SK-N-SH (cell line): ENCODE measurements at regions of chr4 and their contacts with region 1.

Region 1: GRCh38 chr4:158253350-158253980 is 43.2 kb downstream of the TMEM144 start:
- DNase-seq: peak; percentile 48
- H3K4me3 ChIP-seq: no peak overlapping the region
- H3K27ac ChIP-seq: no peak overlapping the region
- H3K4me1 ChIP-seq: no peaks in the 10 kb centered on the region; a peak in 1 of 4 replicates
- H3K27me3 ChIP-seq: no peaks in the 10 kb centered on the region
- CTCF ChIP-seq: peak; percentile 79
- EP300 ChIP-seq: no peak
- RAD21 ChIP-seq: peak; percentile 87

Region 2: GRCh38 chr4:158193171-158193749 is 60.2 kb before region 1 on chr4:
- CTCF ChIA-PET with region 1: interaction called, 11 read pairs
- POLR2A ChIA-PET with region 1: no interaction called
- DNase-seq: peak; percentile 30
- H3K4me3 ChIP-seq: no peak overlapping the region
- H3K27ac ChIP-seq: no peak overlapping the region
- H3K4me1 ChIP-seq: no peaks in the 10 kb centered on the region
- H3K27me3 ChIP-seq: no peaks in the 10 kb centered on the region
- CTCF ChIP-seq: peak; percentile 59
- EP300 ChIP-seq: no peak
- RAD21 ChIP-seq: peak; percentile 49

Region 3: GRCh38 chr4:158234671-158235070 is 18.8 kb before region 1 on chr4:
- CTCF ChIA-PET with region 1: interaction called, 11 read pairs
- POLR2A ChIA-PET with region 1: no interaction called
- DNase-seq: no peak
- H3K4me3 ChIP-seq: no peak overlapping the region
- H3K27ac ChIP-seq: no peak overlapping the region
- H3K4me1 ChIP-seq: peaks cover 0 to 2% of the 10 kb centered on the region in 2 experiments; a peak in 1 of 4 replicates
- H3K27me3 ChIP-seq: no peaks in the 10 kb centered on the region
- CTCF ChIP-seq: no peak
- EP300 ChIP-seq: no peak
- RAD21 ChIP-seq: no peak

Region 4: DNA sequence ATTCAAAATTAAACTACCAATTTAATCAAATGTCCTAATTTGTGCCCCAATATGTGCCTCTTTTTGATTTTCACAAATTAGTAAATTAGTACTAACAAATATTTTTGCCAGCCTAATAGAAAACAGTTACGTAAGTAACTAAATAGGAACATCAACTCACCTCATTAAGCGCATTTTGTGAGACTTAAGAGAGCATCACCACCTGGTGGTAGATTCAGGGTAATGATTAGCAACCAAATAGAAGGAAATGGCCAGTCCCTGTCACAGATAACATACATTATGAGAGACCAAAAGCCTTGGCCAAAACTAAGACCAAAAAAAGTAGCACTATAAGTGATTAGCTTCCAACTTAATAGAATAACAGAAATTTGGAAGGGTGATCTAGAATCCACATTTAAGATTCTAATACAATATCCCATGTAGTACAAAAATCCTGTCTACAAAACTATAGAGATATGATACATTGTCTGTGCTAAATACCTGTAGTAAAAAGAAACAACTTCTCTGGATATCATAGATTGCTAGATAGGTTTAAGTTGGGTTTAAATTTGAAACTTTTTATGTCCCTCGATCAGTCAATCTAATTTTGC is 371.5 kb after region 1 on chr4:
- CTCF ChIA-PET with region 1: interaction called, 49 read pairs
- POLR2A ChIA-PET with region 1: no interaction called
- DNase-seq: peak; percentile 32
- H3K4me3 ChIP-seq: no peak overlapping the region
- H3K27ac ChIP-seq: no peak overlapping the region
- H3K4me1 ChIP-seq: no peaks in the 10 kb centered on the region
- H3K27me3 ChIP-seq: no peaks in the 10 kb centered on the region
- CTCF ChIP-seq: peak; percentile 80
- EP300 ChIP-seq: no peak
- RAD21 ChIP-seq: peak; percentile 90